OCI-LY7 (cell line): ENCODE measurements at regions of chr12 and their contacts with region 1.

Region 1: DNA sequence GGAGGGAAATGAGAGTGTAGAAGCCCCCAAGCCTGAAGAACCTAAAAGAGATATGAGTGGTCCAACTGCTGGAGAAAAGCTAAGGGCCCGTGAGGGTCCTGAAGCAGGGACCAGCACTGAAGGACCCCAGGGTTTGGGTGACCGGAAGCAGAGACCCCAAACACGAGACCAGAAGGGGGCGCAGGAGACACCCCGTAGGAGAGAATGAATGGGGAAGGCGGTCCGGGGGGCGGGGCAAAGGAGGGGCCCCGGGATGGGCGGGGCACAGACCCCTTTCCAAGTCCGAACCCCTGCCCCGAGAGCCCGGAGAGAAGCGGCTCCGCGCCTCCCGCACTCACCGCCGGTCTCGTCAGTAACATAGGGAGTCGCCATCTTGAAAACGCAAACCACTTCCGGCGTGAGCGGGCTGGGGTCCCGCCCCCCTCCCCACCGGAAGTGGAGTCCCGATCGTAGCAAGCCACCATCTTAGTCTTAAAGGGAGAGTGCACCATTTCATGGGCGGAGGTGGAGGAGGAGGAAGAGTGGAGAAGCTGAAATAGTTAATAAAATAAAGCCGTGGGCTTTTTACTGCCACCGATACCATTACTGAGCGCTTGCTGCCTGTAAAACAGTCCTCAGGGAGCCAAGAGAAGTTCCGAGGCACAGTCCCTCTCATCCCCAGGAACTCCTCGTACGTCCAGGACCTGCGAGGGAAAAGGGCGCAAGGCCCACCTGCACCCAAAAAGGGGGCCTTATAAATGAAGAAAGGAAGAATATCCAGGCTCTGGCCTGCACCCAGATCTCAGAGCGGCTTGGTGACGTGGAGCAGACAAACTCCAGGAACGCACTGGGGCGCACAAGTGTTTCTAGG is 731 bp downstream of the PYM1 start:
- DNase-seq: peak; percentile 95
- H3K4me3 ChIP-seq: peak overlapping the region; percentile 82
- H3K27ac ChIP-seq: peak overlapping the region; percentile 99
- H3K4me1 ChIP-seq: peaks cover 51% of the 10 kb centered on the region
- CTCF ChIP-seq: peak; percentile 94

Region 2: GRCh38 chr12:55673638-55674037 is 253.3 kb before region 1 on chr12:
- CTCF ChIA-PET with region 1: no interaction called
- POLR2A ChIA-PET with region 1: no interaction called
- intact Hi-C with region 1: loop called (anchors 5 kb)
- DNase-seq: peak; percentile 87
- H3K4me3 ChIP-seq: peak overlapping the region; percentile 41
- H3K27ac ChIP-seq: peak overlapping the region; percentile 85
- H3K4me1 ChIP-seq: peaks cover 28% of the 10 kb centered on the region
- CTCF ChIP-seq: no peak

Region 3: GRCh38 chr12:55817346-55818139 is 109.4 kb before region 1 on chr12 and contains the starts of genes ORMDL2 and SARNP:
- CTCF ChIA-PET with region 1: no interaction called
- POLR2A ChIA-PET with region 1: interaction called, 18 read pairs
- intact Hi-C with region 1: no loop called
- DNase-seq: peak; percentile 100
- H3K4me3 ChIP-seq: peak within 1 kb of the TSS; percentile 97
- H3K27ac ChIP-seq: peak within 1 kb of the TSS; percentile 55
- H3K4me1 ChIP-seq: peaks cover 32% of the 10 kb centered on the region
- CTCF ChIP-seq: no peak
- total RNA-seq, gene ORMDL2: 13.4 and 20.0 TPM in 2 replicates
- total RNA-seq, gene SARNP: 86.1 and 161 TPM in 2 replicates

Region 4: DNA sequence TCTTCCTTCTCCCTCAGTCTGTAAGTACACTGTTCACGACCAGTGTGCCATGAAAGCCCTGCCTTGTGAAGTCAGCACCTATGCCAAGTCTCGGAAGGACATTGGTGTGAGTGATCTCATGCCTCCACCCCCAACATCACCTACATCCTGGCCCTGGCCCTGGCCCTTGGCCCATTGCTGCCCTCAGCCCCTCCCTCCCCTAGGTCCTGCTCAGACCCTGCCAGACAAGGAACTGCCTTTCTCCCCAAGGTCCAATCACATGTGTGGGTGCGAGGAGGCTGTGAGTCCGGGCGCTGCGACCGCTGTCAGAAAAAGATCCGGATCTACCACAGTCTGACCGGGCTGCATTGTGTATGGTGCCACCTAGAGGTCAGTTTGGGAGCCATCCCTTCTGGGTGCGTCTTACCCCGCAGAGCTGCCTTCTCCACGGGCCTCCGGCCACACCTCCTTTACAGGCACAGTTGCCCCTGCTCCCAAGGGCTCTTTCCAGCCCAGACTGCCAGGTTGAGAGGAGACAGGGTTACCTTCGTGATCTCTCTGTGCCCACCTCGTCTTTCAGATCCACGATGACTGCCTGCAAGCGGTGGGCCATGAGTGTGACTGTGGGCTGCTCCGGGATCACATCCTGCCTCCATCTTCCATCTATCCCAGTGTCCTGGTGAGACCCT is 13.2 kb after region 1 on chr12:
- CTCF ChIA-PET with region 1: interaction called, 4 read pairs
- POLR2A ChIA-PET with region 1: interaction called, 9 read pairs
- intact Hi-C with region 1: loop called (anchors 1 kb)
- DNase-seq: peak; percentile 88
- H3K4me3 ChIP-seq: no peak overlapping the region
- H3K27ac ChIP-seq: peak overlapping the region; percentile 36
- H3K4me1 ChIP-seq: peaks cover 16% of the 10 kb centered on the region
- CTCF ChIP-seq: peak; percentile 95

Region 5: GRCh38 chr12:56041552-56042429 is 114.8 kb after region 1 on chr12 and contains the start of gene RPS26:
- CTCF ChIA-PET with region 1: no interaction called
- POLR2A ChIA-PET with region 1: interaction called, 3 read pairs
- intact Hi-C with region 1: loop called (anchors 1 kb)
- DNase-seq: peak; percentile 100
- H3K4me3 ChIP-seq: peak within 1 kb of the TSS; percentile 83
- H3K27ac ChIP-seq: peak within 1 kb of the TSS; percentile 67
- H3K4me1 ChIP-seq: peaks cover 43% of the 10 kb centered on the region
- CTCF ChIP-seq: peak; percentile 77
- total RNA-seq, gene RPS26: 306 and 600 TPM in 2 replicates

Region 6: DNA sequence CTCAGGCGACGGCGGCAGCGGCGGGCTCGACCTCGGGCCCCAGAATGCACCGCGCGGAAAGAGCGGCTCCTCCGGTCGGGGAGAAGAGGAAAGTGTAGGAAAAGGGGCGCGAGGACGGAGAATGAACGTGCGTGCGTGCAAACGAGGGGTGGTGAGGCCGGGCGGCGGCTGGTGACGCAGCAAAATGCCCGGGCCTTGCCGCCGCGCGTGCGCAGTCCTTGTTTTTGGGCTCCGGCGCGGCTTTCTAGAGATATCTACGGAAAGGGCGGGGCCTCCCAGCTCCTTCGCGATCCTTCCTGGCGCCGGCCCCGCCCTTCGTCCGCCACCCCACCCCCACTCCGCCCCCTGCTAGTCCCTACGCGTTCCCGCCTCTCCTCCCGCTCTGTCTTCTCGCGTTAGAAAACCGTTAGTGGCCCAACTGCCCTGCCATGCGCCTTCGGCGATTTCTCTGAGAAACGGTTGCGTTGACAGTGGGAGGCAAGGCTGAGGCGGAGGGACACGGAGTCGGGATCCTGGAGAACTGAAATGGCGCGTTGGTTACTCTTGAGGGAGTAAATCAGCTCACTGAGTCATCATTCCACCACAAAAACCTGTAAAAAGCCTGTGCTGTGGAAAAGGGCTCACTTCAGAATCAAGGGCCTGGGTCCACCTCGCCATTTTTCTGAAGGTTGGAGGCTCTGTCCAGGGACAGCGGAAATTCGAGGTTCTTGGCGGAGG is 761.3 kb after region 1 on chr12 and contains the start of gene PTGES3:
- CTCF ChIA-PET with region 1: no interaction called
- POLR2A ChIA-PET with region 1: no interaction called
- intact Hi-C with region 1: loop called (anchors 5 kb)
- DNase-seq: peak; percentile 98
- H3K4me3 ChIP-seq: peak within 1 kb of the TSS; percentile 94
- H3K27ac ChIP-seq: peak within 1 kb of the TSS; percentile 91
- H3K4me1 ChIP-seq: peaks cover 34% of the 10 kb centered on the region
- CTCF ChIP-seq: no peak
- total RNA-seq, gene PTGES3: 77.3 and 91.2 TPM in 2 replicates